ENCODE measurements at regions of chr14 and their contacts with region 1.

Region 1: DNA sequence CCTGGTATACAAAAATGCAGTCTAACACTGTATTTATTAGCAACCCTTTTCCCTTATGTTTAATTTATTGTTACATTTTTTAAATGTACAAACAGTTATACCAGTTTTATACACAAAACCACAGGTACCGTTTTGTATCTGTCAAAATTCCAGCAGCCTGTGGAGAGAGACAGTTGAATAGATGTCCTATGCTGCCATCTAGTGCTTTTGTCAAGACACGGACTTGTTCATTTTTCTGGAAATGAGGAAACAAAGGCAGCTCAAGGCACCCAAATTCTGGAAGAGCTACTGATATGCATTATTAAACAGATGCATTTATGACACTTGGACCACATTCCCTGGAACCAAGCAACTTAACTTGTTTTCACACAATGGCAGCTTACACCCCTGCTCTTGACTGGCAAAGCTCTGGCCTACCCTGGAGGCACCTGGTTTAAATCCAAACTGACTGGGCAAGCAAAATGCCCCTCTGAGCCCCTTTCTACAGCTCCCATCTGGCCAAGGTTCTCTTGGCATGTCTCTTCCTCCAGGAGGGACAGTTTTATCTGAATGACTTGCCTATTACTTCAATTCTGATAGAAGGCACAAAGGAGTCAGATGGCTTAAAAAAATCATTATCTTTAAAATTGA is 286.9 kb upstream of the PRKD1 start:
- DNase-seq: peak; percentile 59
- H3K4me3 ChIP-seq: no peak overlapping the region
- H3K27ac ChIP-seq: no peak overlapping the region
- H3K27me3 ChIP-seq: no peaks in the 10 kb centered on the region
- CTCF ChIP-seq: peak; percentile 74

Region 2: DNA sequence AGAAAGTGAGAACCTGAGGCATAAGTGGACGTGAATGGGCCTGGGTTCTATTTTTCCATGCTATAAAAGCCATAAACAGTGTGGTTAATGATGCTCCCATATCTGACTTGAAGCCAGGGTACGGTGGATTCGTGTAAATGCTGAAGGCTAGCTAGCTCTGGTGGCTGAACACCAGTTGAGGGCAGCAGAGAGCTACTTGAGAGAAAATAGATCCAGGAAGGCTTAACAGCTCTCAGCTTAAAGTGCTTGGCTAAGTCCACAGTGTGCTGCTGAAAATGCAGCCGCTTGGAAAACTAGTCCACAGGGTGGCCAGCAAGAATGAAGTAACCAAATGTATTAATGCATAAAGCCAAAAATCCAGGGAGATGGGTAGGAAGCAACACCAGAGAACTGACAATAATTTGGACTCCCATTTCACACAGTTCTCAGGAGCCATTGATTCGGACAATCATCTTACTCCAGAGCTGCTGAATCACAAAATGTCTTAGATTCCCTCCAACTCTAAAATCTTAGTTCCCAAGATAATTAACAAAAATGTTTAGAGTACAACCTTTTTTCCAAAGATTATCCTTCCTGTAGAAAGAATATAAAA is 1463.0 kb before region 1 on chr14:
- CTCF ChIA-PET with region 1: interaction called, 21 read pairs
- POLR2A ChIA-PET with region 1: no interaction called
- DNase-seq: no peak
- H3K4me3 ChIP-seq: no peak overlapping the region
- H3K27ac ChIP-seq: no peak overlapping the region
- H3K27me3 ChIP-seq: peaks cover 15% of the 10 kb centered on the region
- CTCF ChIP-seq: peak; percentile 80

Region 3: GRCh38 chr14:29536886-29537511 is 677.6 kb before region 1 on chr14:
- CTCF ChIA-PET with region 1: interaction called, 16 read pairs
- POLR2A ChIA-PET with region 1: no interaction called
- DNase-seq: no peak
- H3K4me3 ChIP-seq: no peak overlapping the region
- H3K27ac ChIP-seq: no peak overlapping the region
- H3K27me3 ChIP-seq: no peaks in the 10 kb centered on the region
- CTCF ChIP-seq: peak; percentile 59

Region 4: GRCh38 chr14:30005114-30005808 is 209.3 kb before region 1 on chr14:
- CTCF ChIA-PET with region 1: interaction called, 22 read pairs
- POLR2A ChIA-PET with region 1: no interaction called
- DNase-seq: peak; percentile 53
- H3K4me3 ChIP-seq: no peak overlapping the region
- H3K27ac ChIP-seq: no peak overlapping the region
- H3K27me3 ChIP-seq: no peaks in the 10 kb centered on the region
- CTCF ChIP-seq: peak; percentile 85

Region 5: DNA sequence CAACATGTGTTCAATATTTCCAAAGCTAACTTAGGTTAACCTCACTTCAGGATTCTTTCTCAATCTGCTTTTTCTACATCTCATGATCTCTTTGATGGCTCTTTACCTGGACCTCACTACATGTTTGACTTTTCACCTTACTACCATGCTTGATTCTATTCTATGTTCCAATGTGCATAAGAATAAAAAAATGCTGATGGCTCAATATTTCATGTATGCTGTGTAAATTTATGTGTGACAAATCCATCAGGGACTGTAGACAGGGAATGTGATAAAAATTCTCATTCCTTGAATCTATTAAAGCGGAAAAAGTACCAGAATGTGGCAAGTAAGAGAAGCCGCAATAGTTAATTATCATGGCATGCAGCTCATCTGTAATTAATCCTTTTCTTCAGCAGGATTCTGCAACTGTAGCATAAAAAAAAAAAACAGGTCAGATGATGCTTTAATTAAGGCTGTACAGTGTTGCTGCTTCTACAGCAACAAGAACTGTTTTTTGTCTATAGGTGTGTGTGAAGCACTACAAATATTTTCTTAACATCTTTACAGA is 10.1 kb before region 1 on chr14:
- CTCF ChIA-PET with region 1: interaction called, 13 read pairs
- POLR2A ChIA-PET with region 1: no interaction called
- DNase-seq: no peak
- H3K4me3 ChIP-seq: no peak overlapping the region
- H3K27ac ChIP-seq: no peak overlapping the region
- H3K27me3 ChIP-seq: no peaks in the 10 kb centered on the region
- CTCF ChIP-seq: no peak

Region 6: DNA sequence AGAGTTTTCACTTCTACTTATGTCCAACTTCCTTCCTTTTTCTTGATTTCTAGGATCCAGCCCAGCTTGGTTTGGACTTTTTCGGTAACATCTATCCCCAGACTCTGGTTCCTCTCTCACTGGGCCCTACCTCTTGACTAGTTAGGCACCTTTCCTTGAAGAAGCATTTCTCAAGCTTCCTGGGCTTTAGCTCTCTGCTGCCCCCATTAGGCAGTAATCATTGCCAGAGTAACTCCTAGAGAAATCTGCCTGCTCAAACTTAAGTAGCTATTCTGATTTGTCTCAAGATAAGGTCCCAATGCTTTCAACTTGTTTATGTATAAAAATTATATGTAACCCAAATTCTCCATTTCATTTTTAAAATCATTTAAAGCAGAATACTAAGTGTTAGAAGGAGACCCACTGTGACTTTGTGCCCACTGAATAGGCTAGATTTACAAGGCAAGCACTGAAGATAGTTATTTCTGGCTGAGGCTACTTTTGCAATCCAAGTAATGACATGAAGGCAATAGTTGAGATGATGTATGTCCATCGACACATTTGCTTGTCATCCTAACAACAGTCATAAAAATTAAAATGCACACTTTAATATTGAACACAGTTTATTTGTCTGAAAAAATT is 69.4 kb after region 1 on chr14:
- CTCF ChIA-PET with region 1: interaction called, 15 read pairs
- POLR2A ChIA-PET with region 1: no interaction called
- DNase-seq: no peak
- H3K4me3 ChIP-seq: no peak overlapping the region
- H3K27ac ChIP-seq: no peak overlapping the region
- H3K27me3 ChIP-seq: no peaks in the 10 kb centered on the region
- CTCF ChIP-seq: peak; percentile 95

Region 7: GRCh38 chr14:30471980-30472379 is 257.4 kb after region 1 on chr14:
- CTCF ChIA-PET with region 1: no interaction called
- POLR2A ChIA-PET with region 1: no interaction called
- DNase-seq: no peak
- H3K4me3 ChIP-seq: no peak overlapping the region
- H3K27ac ChIP-seq: no peak overlapping the region
- H3K27me3 ChIP-seq: no peaks in the 10 kb centered on the region
- CTCF ChIP-seq: no peak

Region 8: GRCh38 chr14:30779196-30779595 is 564.6 kb after region 1 on chr14:
- CTCF ChIA-PET with region 1: no interaction called
- POLR2A ChIA-PET with region 1: no interaction called
- DNase-seq: no peak
- H3K4me3 ChIP-seq: no peak overlapping the region
- H3K27ac ChIP-seq: no peak overlapping the region
- H3K27me3 ChIP-seq: peaks cover 4% of the 10 kb centered on the region
- CTCF ChIP-seq: no peak